Adrenal gland (tissue), 19 donors: ENCODE measurements at regions of chr6 and their contacts with region 1.

Region 1: DNA sequence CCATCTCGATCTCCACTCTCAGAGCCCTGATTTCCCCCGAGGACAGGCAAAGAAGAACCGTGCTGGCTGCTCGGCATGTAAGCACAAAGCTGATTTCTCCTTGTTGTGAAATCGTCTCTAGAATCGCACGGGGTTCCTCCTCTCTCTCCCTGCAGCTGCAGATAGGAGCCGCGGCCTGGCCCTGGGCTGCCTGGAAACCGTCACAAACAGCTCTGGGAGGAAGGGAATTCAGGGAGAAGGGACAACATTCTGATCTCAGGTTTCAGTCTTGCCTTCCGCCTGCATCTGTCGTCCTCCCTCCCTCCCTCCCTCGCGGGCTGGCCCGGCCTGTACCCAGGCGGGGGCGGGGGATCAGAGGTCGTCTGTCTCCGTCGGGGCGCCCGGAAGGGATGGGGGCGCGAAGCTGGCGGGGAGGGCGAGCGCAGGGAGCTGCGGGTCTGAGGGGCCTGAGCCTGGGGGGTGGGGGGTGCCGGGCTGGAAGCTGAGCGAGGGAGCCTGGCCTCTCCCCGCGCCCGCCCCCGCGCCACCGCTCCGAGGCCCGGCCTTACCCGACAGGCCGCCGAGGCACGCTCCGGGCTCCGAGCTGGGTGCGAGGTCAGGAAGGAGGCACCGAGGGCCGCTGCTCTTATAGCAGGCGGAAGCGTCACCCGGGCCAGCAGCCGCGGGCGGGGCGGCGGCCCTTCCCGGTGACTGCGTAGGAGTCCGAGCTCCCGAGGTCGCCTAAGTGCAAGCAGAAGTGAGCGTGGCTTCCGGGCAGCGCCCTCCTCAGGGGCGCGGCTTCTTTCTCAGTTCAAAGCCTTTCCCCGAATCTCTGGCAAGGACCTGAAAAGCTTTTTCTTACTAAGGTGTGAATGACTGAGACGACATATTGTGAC is at the start of gene SERPINB1:
- DNase-seq: peak; percentile 88 to 97 (median 95)
- H3K4me3 ChIP-seq: peak within 1 kb of the TSS in 3 of 4 donors; percentile 42 to 58 (median 48)
- H3K27ac ChIP-seq: peak within 1 kb of the TSS; percentile 89 to 97 (median 96)
- H3K4me1 ChIP-seq: peaks cover 23 to 42% of the 10 kb centered on the region in 2 donors
- H3K27me3 ChIP-seq: no peaks in the 10 kb centered on the region
- CTCF ChIP-seq: peak in 3 of 6 experiments; percentile 4 to 13 (median 8)
- POLR2A ChIP-seq: peak; percentile 72 to 79
- total RNA-seq, gene SERPINB1: 41.6 to 159 (median 62.7) TPM

Region 2: GRCh38 chr6:2327591-2327990 is 513.9 kb before region 1 on chr6:
- intact Hi-C with region 1: no loop called
- DNase-seq: no peak
- H3K4me3 ChIP-seq: no peak overlapping the region
- H3K27ac ChIP-seq: no peak overlapping the region
- H3K4me1 ChIP-seq: no peaks in the 10 kb centered on the region
- H3K27me3 ChIP-seq: no peaks in the 10 kb centered on the region
- CTCF ChIP-seq: no peak
- POLR2A ChIP-seq: no peak

Region 3: DNA sequence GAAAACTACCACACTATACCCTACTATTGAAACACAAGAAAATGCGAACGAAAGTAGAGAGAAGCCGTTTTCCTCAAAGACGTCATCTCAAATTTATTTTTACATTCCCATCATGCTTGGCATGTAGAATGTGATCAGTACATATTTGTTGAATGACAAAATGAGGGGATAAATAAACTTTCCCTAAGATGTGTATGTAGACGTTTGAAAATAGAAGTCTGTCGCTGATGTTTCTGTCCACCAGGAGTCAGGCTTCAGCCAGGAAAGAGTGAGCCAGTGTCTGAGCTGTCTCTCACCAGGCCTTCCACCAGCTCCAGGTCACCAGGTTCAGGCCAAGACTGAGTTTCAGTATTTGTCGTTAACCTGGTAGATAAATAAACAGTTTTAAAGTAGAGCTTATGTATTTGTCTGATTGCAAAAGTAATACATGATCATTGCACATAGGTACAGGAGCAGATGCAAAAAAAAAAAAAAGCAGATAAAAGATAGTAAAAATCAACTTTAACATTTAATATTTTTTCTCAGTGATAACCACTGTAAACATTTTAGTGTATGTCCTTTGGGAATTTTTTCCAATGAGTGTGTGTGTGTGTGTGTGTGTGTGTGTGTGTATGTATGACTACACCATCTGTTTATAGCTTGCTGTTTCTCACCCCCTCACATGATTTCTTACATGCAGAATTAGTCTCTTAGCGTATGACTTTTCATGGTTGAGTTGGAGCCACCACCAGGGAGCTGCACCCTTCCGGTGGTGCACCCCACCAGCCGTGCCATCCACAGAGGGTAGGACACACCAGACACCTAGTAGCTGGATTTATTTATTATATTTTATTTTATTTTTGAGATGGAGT is 50.2 kb before region 1 on chr6:
- intact Hi-C with region 1: loop called in 1 of 2 experiments (anchors 5 kb)
- DNase-seq: peak; percentile 59 to 88 (median 72)
- H3K4me3 ChIP-seq: no peak overlapping the region
- H3K27ac ChIP-seq: peak overlapping the region in 1 of 5 donors; percentile 15
- H3K4me1 ChIP-seq: no peaks in the 10 kb centered on the region
- H3K27me3 ChIP-seq: no peaks in the 10 kb centered on the region
- CTCF ChIP-seq: peak; percentile 45 to 87 (median 79)
- POLR2A ChIP-seq: no peak